ENCODE measurements at regions of chr1 and their contacts with region 1.

Region 1: GRCh38 chr1:160098852-160099561 is 588 bp upstream of the IGSF8 start:
- DNase-seq: peak; percentile 92
- ATAC-seq: peak; percentile 80 to 89
- H3K4me3 ChIP-seq: peak overlapping the region; percentile 83
- H3K27ac ChIP-seq: peak overlapping the region; percentile 74 to 82
- H3K4me1 ChIP-seq: peaks cover 37% of the 10 kb centered on the region
- CTCF ChIP-seq: no peak
- EP300 ChIP-seq: no peak
- POLR2A ChIP-seq: peak; percentile 17; the same call in 1 of the 2 replicates
- RAD21 ChIP-seq: no peak

Region 2: DNA sequence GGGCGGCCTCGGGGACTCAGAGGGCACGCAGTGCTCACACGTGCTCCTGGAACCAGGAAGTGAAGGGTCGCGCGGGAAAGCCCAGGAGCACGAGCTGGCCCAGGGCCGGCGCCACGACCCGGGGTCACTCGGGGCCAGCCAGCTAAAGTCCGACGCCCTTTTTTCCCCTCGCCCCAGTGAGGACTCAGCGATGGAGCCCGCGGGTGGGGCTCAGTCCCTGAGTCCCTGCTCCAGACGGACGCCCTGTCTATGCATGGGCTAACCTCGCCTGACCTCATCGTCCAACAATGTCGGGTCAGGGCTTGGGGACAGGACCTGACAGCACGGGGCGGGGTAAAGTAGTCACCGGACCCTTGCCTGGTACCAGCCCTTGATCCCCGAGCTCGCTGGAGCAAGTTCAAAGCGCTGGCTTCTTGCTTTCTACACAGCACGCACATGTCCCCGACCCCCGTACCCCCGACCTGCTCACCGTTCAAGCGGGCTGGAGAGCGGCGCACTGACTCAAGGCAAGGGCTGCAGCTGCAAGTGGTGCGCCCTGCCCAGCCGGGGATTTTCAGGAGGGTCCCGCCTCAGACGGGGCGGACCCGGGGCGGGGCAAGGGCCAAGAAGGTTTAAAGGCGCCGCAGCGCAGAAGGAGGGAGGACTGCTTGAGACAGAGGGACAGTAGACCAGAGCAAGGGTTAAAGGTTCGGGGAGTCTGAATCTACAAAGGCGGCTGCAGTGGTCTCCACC is 173.9 kb before region 1 on chr1 and contains the start of gene TAGLN2:
- CTCF ChIA-PET with region 1: no interaction called
- POLR2A ChIA-PET with region 1: no interaction called
- DNase-seq: peak; percentile 92 to 96
- ATAC-seq: peak; percentile 67 to 84
- H3K4me3 ChIP-seq: peak within 1 kb of the TSS; percentile 87
- H3K27ac ChIP-seq: peak within 1 kb of the TSS; percentile 97 to 99
- H3K4me1 ChIP-seq: peaks cover 40% of the 10 kb centered on the region
- CTCF ChIP-seq: no peak
- EP300 ChIP-seq: no peak
- POLR2A ChIP-seq: peak; percentile 96
- RAD21 ChIP-seq: no peak
- polyA plus RNA-seq, gene TAGLN2: 533 and 536 TPM in 2 replicates

Region 3: DNA sequence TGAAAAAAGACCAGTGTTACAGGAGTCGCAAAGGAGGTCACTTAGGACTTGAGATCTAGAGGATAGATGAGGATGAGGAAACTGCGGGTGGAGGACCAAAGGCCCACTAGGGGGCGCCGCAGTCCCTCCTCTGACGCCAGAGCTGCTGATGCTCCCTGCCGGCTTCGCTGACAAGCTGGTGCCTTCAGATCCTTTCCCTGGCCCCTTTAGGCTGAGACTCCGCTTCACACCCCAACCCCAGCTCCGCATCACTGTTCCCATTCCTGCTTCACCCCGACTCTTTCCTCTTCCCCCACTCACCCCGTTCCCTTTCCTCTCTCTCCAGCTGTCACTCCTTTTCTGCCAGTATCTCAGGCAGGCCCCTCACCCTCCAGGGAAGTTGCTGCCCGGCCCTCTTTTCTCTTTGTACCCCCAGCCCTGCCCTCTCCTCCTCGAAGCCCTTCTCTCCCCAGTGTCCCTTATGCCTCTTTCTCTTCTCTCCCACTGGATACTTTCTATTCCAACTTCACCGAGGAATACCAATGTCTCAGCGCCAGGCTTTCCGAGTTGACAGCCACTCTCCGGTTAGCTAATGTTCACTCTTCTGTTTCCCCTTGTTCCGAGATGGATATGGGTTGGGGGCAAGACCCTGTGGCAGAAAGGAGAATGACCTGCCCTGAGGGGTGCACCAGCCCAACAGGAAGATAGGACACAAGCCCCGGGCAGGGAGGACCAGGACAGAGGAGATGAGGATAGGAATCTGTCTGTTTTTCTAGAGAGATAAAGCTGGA is 13.1 kb before region 1 on chr1:
- CTCF ChIA-PET with region 1: interaction called, 80 read pairs
- POLR2A ChIA-PET with region 1: no interaction called
- DNase-seq: peak; percentile 83 to 94
- ATAC-seq: peak; percentile 72 to 88
- H3K4me3 ChIP-seq: no peak overlapping the region
- H3K27ac ChIP-seq: no peak overlapping the region
- H3K4me1 ChIP-seq: 0 out of 3 replicates have a peak, but pooled peaks cover 2% of the 10 kb centered on the region
- CTCF ChIP-seq: peak; percentile 82
- EP300 ChIP-seq: no peak
- POLR2A ChIP-seq: no peak
- RAD21 ChIP-seq: peak; percentile 70 to 72

Region 4: GRCh38 chr1:160161965-160162705 is 63.1 kb after region 1 on chr1:
- CTCF ChIA-PET with region 1: interaction called, 40 read pairs
- POLR2A ChIA-PET with region 1: no interaction called
- DNase-seq: peak in 1 of 2 experiments; percentile 27
- ATAC-seq: peak; percentile 35 to 76; a peak in 3 of 6 replicates
- H3K4me3 ChIP-seq: no peak overlapping the region
- H3K27ac ChIP-seq: no peak overlapping the region
- H3K4me1 ChIP-seq: peaks cover 7% of the 10 kb centered on the region; the same call in 1 of the 3 replicates
- CTCF ChIP-seq: no peak
- EP300 ChIP-seq: no peak
- POLR2A ChIP-seq: no peak
- RAD21 ChIP-seq: no peak; a peak in 1 of 5 replicates

Region 5: DNA sequence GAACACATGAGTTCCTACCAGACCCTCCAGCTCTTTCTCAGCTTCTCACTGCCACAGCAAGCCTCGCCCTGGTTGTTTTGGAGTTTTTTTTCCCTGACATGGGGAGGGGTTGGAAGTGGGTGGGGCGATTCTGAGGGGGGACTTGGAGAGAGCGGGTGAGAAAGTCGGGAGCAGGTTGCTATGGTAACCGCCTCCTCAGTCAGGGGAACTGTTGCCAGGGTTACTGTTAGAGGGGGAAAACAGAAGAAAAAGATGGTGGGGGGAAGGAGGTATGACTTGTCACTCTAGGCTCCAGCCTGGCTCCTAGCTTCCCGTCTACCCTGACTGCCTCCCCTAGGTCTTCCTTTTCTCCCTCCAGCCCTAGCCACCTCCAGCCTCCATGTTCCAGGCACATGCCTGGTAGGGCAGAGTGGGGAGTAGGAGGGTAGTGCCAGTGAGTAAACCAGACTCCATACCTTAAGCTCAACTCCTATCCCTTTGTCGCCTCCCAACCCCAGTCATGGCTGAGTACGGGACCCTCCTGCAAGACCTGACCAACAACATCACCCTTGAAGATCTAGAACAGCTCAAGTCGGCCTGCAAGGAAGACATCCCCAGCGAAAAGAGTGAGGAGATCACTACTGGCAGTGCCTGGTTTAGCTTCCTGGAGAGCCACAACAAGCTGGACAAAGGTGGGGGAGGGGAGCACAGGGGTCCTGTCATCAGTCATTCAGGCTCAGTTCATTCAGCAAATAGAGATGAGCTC is 112.2 kb after region 1 on chr1:
- CTCF ChIA-PET with region 1: interaction called, 52 read pairs
- POLR2A ChIA-PET with region 1: no interaction called
- DNase-seq: no peak
- ATAC-seq: no peak
- H3K4me3 ChIP-seq: no peak overlapping the region
- H3K27ac ChIP-seq: no peak overlapping the region
- H3K4me1 ChIP-seq: peaks cover 32% of the 10 kb centered on the region
- CTCF ChIP-seq: no peak
- EP300 ChIP-seq: no peak
- POLR2A ChIP-seq: no peak
- RAD21 ChIP-seq: no peak

Region 6: DNA sequence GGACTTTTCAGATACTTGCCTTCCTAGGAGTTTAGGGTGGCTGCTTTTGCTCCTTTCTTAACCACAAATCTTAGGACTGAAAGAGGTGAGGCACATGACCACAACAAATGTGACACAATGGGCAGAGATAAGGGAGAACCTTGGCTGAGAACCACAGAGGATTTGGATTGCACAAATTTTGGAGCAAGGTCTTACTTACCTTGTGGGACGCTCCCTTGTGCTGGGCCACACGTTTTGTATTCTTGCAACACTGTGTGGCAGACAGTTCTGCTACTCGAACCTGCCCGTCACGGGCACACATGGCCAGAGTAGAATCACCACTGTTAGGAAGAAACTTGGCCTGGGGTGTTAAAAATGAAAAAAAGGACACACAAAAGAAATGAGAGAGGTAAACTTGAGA is 139.4 kb after region 1 on chr1:
- CTCF ChIA-PET with region 1: interaction called, 26 read pairs
- POLR2A ChIA-PET with region 1: no interaction called
- DNase-seq: no peak
- ATAC-seq: no peak
- H3K4me3 ChIP-seq: no peak overlapping the region
- H3K27ac ChIP-seq: no peak overlapping the region
- H3K4me1 ChIP-seq: no peaks in the 10 kb centered on the region
- CTCF ChIP-seq: no peak
- EP300 ChIP-seq: no peak
- POLR2A ChIP-seq: no peak
- RAD21 ChIP-seq: no peak

Region 7: DNA sequence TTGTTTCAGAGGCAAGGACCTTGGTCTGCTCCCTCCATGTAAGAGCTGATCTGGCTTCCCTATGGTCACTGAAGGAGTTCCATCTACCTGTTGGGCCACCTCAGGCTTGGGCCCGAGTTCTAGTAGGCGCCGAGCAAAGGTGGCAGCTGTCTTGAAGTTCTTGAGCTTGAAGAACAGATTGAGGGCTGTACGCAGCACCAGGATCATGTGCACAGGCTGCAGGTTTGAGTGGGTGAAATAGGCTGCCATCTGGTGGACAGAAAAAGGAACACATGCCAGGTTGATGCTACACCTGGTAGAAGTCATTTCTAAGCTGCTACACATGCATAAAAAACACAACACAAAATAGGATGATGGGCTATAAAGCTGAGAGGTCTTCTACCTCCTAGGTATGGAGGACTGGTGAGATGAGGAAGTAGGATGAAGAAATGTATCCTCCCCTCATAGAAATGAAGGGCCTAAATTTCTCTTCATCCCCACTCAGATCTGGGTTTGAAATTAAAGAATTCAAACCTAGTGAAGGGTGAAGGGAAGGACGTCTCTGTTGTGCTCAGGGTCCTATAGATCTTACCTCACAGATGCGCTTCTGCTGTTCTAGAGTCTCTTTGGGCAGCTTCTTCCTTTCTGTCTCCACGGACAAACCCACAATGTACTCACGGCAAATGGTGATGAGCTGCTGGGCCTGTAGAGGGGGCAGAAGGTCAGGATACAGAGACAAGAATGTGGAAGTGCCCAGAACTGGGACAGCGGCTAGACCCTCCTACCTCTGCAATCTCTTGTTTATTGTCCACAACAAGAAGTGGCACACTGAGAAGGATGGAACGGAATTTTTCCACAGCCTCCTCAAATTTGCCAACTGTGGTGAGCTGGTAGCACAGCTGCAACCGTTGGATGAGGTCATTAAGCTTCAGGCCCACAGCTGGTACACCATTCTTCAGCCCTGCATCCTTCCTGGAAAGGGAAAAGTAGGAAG is 192.5 kb after region 1 on chr1:
- CTCF ChIA-PET with region 1: interaction called, 97 read pairs
- POLR2A ChIA-PET with region 1: no interaction called
- DNase-seq: peak; percentile 62 to 76
- ATAC-seq: peak; percentile 92 to 95
- H3K4me3 ChIP-seq: no peak overlapping the region
- H3K27ac ChIP-seq: no peak overlapping the region
- H3K4me1 ChIP-seq: no peaks in the 10 kb centered on the region
- CTCF ChIP-seq: peak; percentile 84
- EP300 ChIP-seq: no peak
- POLR2A ChIP-seq: no peak
- RAD21 ChIP-seq: peak; percentile 51 to 56

Measured in A549 (cell line).